ENCODE measurements at regions of chr1 and their contacts with region 1.

Region 1: DNA sequence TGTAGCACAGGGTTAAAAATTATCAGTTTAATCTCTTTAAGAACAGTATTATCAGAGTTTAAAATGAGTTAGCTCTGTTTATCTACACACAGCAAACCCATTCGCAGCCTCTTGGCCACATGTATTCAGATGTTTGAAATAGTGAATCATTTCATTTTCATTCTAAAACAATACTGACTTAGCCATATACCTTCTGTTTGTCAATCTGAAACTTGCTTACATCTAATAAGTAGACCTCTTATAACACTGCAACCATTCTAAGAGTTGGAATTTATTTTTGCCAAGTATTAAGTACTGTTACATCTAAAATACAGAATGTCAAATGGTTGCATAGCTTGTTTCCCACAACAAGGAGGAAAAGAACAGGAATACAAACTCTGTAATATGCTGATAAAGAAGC is 25.4 kb downstream of the ANGEL2 start:
- DNase-seq: no peak
- ATAC-seq: no peak
- H3K4me3 ChIP-seq: no peak overlapping the region
- H3K27ac ChIP-seq: no peak overlapping the region
- H3K4me1 ChIP-seq: peaks cover 0 to 8% of the 10 kb centered on the region in 2 experiments; a peak in 2 of 4 replicates
- H3K27me3 ChIP-seq: no peaks in the 10 kb centered on the region
- CTCF ChIP-seq: no peak
- POLR2A ChIP-seq: no peak
- RAD21 ChIP-seq: no peak

Region 2: GRCh38 chr1:212368073-212368484 is 622.2 kb before region 1 on chr1:
- CTCF ChIA-PET with region 1: no interaction called
- POLR2A ChIA-PET with region 1: no interaction called
- RAD21 ChIA-PET with region 1: no interaction called
- intact Hi-C with region 1: loop called (anchors 5 kb)
- DNase-seq: peak; percentile 66
- ATAC-seq: peak; percentile 98
- H3K4me3 ChIP-seq: no peak overlapping the region
- H3K27ac ChIP-seq: no peak overlapping the region
- H3K4me1 ChIP-seq: no peaks in the 10 kb centered on the region
- H3K27me3 ChIP-seq: no peaks in the 10 kb centered on the region
- CTCF ChIP-seq: peak; percentile 76 to 96 (median 92); a peak in 5 of 6 replicates
- POLR2A ChIP-seq: no peak
- RAD21 ChIP-seq: peak; percentile 92

Region 3: GRCh38 chr1:212698467-212699103 is 291.7 kb before region 1 on chr1:
- CTCF ChIA-PET with region 1: no interaction called
- POLR2A ChIA-PET with region 1: no interaction called
- RAD21 ChIA-PET with region 1: no interaction called
- intact Hi-C with region 1: loop called (anchors 1 kb)
- DNase-seq: no peak
- ATAC-seq: no peak
- H3K4me3 ChIP-seq: peak overlapping the region; percentile 47 to 58
- H3K27ac ChIP-seq: no peak overlapping the region
- H3K4me1 ChIP-seq: peaks cover 9 to 25% of the 10 kb centered on the region in 2 experiments
- H3K27me3 ChIP-seq: peaks cover 16% of the 10 kb centered on the region; the same call in 1 of the 2 replicates
- CTCF ChIP-seq: no peak
- POLR2A ChIP-seq: no peak
- RAD21 ChIP-seq: no peak

Region 4: DNA sequence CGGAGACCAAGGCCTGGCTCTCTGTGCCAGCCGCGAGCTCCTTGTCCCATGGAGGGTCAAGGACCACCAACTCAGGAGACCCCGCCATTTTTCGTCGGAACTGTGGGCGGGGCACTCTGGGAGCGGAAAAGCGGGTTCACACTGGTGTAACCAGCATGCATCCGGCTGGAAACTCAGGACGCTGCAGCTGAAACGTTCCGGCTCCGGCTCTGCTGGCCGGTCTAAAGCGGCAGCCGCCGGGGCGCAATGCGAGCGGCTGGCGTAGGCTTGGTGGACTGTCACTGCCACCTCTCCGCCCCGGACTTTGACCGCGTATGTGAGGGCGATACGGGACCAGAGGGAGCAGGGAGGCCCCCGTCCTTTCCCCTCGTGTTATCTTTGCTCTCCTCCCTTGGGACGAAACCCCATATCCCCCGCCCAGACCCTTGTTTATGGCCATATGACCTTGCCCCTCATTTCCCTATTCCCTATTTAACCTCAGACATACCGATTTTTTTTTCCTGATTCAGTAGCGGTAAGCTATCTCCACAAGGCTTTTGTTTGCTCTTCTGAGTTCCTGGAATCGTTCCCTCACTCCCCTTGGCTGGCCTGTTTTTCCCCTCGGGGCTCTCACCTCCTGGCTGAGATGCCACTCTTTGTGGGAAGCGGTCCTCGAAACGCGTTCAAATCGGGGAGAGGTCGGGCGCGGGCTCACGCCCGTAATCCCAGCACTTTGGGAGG is 198.4 kb before region 1 on chr1 and contains the starts of genes NSL1 and TATDN3:
- CTCF ChIA-PET with region 1: interaction called, 3 read pairs
- POLR2A ChIA-PET with region 1: no interaction called
- RAD21 ChIA-PET with region 1: no interaction called
- intact Hi-C with region 1: loop called (anchors 5 kb)
- DNase-seq: peak; percentile 88
- ATAC-seq: peak; percentile 89
- H3K4me3 ChIP-seq: peak within 1 kb of the TSS; percentile 92
- H3K27ac ChIP-seq: peak within 1 kb of the TSS; percentile 74
- H3K4me1 ChIP-seq: peaks cover 12 to 21% of the 10 kb centered on the region in 2 experiments
- H3K27me3 ChIP-seq: no peaks in the 10 kb centered on the region
- CTCF ChIP-seq: no peak
- POLR2A ChIP-seq: peak; percentile 59
- RAD21 ChIP-seq: no peak
- total RNA-seq, gene NSL1: 36.4 TPM
- total RNA-seq, gene TATDN3: 16.3 TPM

Region 5: GRCh38 chr1:212920896-212921295 is 69.4 kb before region 1 on chr1:
- CTCF ChIA-PET with region 1: no interaction called
- POLR2A ChIA-PET with region 1: no interaction called
- RAD21 ChIA-PET with region 1: no interaction called
- intact Hi-C with region 1: loop called (anchors 1 kb)
- DNase-seq: no peak
- ATAC-seq: peak; percentile 72
- H3K4me3 ChIP-seq: no peak overlapping the region
- H3K27ac ChIP-seq: no peak overlapping the region
- H3K4me1 ChIP-seq: no peaks in the 10 kb centered on the region
- H3K27me3 ChIP-seq: no peaks in the 10 kb centered on the region
- CTCF ChIP-seq: peak; percentile 31 to 66 (median 61); a peak in 4 of 6 replicates
- POLR2A ChIP-seq: no peak
- RAD21 ChIP-seq: peak; percentile 48